Tibial artery (tissue), 4 donors: ENCODE measurements at regions of chrX and their contacts with region 1.

Region 1: DNA sequence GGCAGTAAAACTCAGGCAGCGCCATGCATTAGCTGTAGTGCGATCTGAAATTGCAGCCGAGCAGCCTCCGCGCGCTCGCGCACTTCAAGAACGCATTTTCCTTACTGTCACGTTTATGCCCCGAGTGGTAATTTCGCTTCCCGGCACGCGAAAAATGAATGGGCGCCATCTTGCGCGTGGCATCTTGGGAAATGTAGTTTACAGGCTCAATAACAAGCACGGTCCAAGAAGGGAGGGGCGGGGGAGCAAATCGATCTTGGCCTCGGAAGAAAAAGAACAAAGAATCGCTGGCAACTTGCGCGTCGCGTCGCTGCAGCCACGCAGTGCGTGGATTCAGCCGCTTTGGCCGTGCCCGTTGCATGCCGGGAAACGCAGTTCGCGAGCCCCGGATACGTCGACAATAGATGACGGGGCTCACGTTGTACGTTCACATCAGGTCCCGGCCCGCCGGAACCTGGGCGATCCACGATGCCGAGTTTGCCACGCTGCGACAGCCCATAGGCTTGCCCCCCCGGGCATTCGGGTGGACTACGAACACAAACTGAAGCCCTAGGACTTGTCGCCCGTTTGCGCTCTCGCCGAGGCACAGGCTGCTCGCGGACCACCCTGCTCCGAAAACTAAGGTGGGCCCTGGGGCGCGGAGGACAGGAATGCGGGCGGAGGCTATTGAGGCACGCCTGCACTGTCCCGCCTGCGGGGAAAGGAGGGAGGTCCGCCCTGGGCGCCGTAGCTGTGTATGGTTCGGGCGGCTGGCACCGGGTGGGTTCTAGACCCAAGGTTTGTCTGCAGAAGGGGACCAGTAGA is at the start of gene FTSJ1:
- DNase-seq: peak; percentile 89 to 93
- H3K4me3 ChIP-seq: peak within 1 kb of the TSS; percentile 73 to 77
- H3K27ac ChIP-seq: peak within 1 kb of the TSS; percentile 87 to 92
- H3K4me1 ChIP-seq: peaks cover 0 to 17% (median 4%) of the 10 kb centered on the region in 4 donors
- H3K27me3 ChIP-seq: no peaks in the 10 kb centered on the region
- CTCF ChIP-seq: no peak

Region 2: DNA sequence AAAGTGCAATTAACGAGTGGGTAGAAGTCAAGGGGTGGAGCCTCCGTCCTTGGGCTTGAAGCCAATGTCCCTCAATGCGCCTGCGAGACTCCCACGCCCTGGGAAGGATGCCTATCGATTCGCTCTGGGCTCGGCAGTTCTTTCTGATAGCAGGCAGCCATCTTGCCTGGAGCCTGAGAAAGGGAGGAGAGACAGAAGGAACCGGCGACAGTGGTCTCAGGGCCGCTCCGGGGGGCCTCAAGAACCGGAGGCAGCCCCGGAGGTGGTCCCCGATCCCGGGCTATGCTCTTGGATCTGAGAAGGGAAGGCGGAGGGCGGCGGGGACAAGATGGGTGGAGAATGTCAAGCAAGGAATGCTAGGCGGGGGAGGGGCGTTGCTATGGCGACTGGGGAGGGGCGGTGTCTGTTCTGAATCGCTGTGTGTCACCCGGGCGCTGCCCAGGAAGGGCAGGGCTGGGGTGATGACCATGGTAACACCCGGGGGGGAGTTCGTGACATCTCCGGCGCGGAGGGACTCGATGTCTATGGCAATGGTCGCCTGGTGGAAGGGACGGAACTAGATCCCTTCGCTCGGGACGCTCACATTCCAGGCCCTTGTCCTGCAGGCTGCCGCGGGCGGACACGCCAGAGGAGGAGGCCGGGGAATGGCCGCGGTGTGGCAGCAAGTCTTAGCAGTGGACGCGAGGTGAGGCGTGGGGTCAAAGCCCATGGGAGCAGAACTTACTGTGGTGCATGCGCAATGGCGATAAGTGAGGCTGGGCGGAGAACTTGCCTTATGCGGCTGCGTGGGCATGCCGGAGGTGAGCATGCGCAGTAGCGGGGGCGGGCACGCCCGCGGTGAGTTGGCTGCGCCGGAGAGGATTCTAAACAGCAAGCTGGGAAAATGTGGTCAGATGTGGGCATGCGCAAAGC is 121.6 kb after region 1 on chrX and contains the start of gene WDR13:
- intact Hi-C with region 1: loop called (anchors 10 kb)
- DNase-seq: peak; percentile 89 to 96
- H3K4me3 ChIP-seq: peak within 1 kb of the TSS; percentile 63 to 65
- H3K27ac ChIP-seq: peak within 1 kb of the TSS; percentile 93 to 94
- H3K4me1 ChIP-seq: peaks cover 0 to 8% (median 5%) of the 10 kb centered on the region in 4 donors
- H3K27me3 ChIP-seq: no peaks in the 10 kb centered on the region
- CTCF ChIP-seq: no peak